Posterior vena cava (tissue), 2 donors: ENCODE measurements at regions of chr22 and their contacts with region 1.

Region 1: GRCh38 chr22:27740192-27740748 is 61.3 kb downstream of the MN1 start:
- DNase-seq: no peak

Region 2: DNA sequence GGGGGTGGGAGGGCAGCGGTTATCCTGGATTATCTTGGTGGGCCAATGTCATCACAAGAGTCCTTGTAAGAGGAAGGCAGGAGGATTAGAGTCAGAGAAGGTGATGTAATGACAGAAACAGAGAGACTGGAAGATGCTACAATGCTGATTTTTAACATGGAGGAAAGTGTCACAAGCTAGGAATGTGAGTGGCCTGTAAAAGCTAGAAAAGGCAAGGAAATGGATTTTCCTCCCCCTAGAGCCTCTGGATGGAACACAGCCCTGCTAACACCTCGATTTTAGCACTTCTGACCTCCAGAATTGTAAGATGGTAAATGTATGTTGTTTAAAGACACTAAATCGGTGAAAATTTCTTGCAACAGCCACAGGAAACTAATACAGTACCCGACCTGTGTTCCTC is 48.0 kb before region 1 on chr22:
- intact Hi-C with region 1: loop called in 1 of 2 experiments (anchors 1 kb)
- DNase-seq: no peak